ENCODE measurements at regions of chr6 and their contacts with region 1.

Region 1: DNA sequence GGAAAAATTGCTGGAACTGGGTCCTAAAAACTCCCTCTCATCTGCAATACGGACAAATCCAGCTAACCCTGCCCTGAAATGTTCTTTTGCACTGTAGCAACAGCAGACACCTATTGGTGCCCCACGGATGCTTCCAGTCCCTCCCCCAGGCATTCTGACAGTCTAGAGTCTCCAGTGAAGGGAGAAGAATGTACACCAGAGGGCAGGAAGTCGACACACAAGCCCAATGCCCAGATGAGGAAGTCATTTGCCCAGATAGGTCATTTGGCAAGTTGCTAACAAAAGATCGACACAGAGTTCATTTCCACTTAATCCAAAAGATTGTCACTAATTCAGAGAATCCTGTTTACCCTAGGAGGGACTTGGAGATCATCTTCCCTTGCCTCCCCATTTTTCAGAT is 293.0 kb upstream of the PRDM1 start:
- DNase-seq: no peak
- H3K4me3 Mint-ChIP-seq: peak overlapping the region; percentile 5
- H3K27ac Mint-ChIP-seq: peak overlapping the region; percentile 66
- H3K4me1 Mint-ChIP-seq: peaks cover 86% of the 10 kb centered on the region
- H3K27me3 Mint-ChIP-seq: no peaks in the 10 kb centered on the region

Region 2: GRCh38 chr6:105692626-105693215 is 100.4 kb before region 1 on chr6:
- intact Hi-C with region 1: loop called (anchors 5 kb)
- DNase-seq: no peak
- H3K4me3 Mint-ChIP-seq: no peak overlapping the region
- H3K27ac Mint-ChIP-seq: no peak overlapping the region
- H3K4me1 Mint-ChIP-seq: peaks cover 22% of the 10 kb centered on the region
- H3K27me3 Mint-ChIP-seq: peaks cover 12% of the 10 kb centered on the region

Region 3: GRCh38 chr6:105748737-105749161 is 44.4 kb before region 1 on chr6:
- intact Hi-C with region 1: loop called (anchors 2 kb)
- DNase-seq: no peak
- H3K4me3 Mint-ChIP-seq: no peak overlapping the region
- H3K27ac Mint-ChIP-seq: no peak overlapping the region
- H3K4me1 Mint-ChIP-seq: peaks cover 57% of the 10 kb centered on the region
- H3K27me3 Mint-ChIP-seq: no peaks in the 10 kb centered on the region

Region 4: DNA sequence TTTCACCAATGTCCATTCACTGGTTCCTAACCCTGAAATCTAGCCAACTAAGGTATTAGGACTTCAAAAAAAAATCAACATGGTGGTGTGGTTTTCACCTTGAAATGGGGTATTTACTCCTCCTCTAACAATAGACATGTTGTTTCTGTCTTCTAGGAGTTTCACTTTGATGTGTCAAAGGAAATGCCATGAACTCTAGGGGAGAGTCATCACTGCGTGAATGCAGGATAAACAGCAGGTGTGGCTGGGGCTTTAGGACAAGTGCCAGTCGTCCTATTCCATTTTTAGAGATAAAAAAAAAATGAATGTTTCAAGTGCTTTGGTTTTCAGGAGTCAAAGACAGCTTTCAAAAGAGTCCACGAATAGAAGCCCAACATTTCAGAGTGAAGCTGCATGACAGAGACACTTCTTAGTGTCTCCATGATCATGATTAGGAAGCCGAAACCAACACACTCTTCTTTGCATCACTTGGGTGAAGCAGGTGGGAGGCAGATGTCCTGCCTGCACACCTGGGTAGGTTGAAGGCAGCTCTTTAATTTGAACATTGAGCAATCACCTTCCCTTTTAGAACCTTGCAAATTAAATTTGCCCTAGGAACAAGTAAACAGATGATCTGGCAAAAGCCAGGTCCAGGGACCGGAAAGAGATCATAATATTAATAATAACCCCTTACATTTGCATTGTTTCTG is 35.5 kb before region 1 on chr6:
- intact Hi-C with region 1: loop called (anchors 2 kb)
- DNase-seq: peak; percentile 28
- H3K4me3 Mint-ChIP-seq: peak overlapping the region; percentile 64
- H3K27ac Mint-ChIP-seq: peak overlapping the region; percentile 77
- H3K4me1 Mint-ChIP-seq: peaks cover 61% of the 10 kb centered on the region
- H3K27me3 Mint-ChIP-seq: no peaks in the 10 kb centered on the region

Region 5: GRCh38 chr6:105781915-105782314 is 11.2 kb before region 1 on chr6:
- intact Hi-C with region 1: loop called (anchors 1 kb)
- DNase-seq: no peak
- H3K4me3 Mint-ChIP-seq: peak overlapping the region; percentile 40
- H3K27ac Mint-ChIP-seq: peak overlapping the region; percentile 62
- H3K4me1 Mint-ChIP-seq: peaks cover 74% of the 10 kb centered on the region
- H3K27me3 Mint-ChIP-seq: no peaks in the 10 kb centered on the region

Measured in activated T-helper 1 cell treated with anti-CD3 and anti-CD28 coated beads, Interleukin-12 subunit alpha, Interleukin-12 subunit beta, Interleukin-2, Interleukin-4 antibody, amounts not matched to agents 30 ng/mL and 10 ng/mL and 1 ng/mL, durations not matched to agents 14 hours and 24 hours and 36 hours (primary cell).